A673 (cell line): ENCODE measurements at regions of chr2 and their contacts with region 1.

Region 1: DNA sequence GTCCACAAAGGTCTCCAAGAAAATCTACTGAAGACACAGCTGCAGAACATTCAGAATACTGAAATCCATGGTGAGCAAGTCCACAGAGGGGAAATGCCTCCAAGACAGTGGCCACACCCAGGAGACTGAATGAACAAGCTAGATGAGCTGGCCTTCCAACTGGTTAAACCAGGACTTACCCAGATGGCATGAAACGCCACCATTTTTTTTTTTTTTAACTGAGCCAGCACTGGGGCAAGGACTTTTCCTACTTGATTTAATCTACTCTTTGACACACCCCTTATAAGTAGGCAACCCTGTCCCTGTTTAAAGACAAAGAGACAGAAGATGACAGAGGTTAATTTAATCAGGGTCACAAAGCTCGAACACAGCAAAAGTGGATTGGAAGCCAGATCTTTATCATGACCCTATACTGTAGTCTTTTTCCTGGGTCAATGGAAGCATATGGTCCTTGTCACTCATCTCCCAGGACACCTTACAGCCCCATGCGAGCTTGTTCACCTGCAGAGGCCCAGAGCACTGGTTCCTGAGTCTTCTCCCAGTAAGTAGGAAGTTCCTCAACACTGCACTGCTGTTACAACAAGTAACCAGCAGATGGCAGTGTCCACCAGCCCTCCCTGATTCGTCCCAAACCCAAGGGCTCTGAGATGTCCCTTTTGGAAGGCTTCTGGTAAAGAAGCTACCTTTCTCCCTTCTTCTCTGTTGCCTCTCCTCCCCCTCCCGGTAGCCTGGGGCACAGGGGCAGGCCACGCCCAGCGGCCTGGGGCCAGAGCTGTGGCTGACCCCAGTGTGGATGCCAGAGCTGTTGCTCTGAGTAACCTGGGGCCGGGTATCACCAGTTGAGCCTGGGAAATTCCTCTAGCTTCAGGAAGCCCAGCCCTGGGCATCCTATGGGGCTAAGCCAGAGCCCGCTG is 5.6 kb upstream of the GDF7 start:
- DNase-seq: peak; percentile 83
- H3K4me3 ChIP-seq: no peak overlapping the region
- H3K27ac ChIP-seq: no peak overlapping the region
- H3K4me1 ChIP-seq: peaks cover 1% of the 10 kb centered on the region
- H3K27me3 ChIP-seq: peaks cover 96% of the 10 kb centered on the region
- CTCF ChIP-seq: peak; percentile 94

Region 2: DNA sequence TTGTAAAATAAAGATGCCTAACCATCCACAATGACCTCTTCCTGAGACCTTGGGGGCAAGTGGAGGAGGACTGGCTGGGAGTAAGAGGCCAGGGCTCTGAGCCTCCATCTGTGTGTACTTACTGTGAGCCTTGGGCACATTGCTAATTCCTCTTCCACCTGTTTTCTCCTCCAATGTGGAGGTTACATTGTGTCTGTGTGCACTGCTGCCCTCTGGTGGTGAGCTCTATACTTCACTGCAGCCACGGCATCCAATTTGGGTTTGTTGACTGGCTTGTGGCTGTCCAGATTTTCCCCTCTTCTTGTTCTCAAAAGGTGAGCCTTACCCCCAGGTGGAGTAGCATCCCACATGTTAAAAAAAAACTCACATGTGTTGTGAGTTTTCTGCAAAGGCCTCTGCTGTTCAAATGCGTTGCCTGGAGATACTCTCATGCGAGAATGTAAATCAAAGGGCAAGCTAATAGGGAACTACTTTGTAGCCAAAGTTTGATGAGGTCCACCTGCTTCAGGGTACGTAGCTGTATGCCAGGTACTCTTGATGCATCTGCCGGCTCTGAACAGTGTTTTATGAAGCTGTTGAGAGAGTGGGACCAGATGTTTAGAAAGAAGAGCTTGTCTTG is 301.7 kb after region 1 on chr2:
- CTCF ChIA-PET with region 1: interaction called, 55 read pairs
- POLR2A ChIA-PET with region 1: no interaction called
- intact Hi-C with region 1: loop called (anchors 1 kb)
- DNase-seq: peak; percentile 63
- H3K4me3 ChIP-seq: no peak overlapping the region
- H3K27ac ChIP-seq: no peak overlapping the region
- H3K4me1 ChIP-seq: no peaks in the 10 kb centered on the region
- H3K27me3 ChIP-seq: peaks cover 91% of the 10 kb centered on the region
- CTCF ChIP-seq: peak; percentile 91

Region 3: GRCh38 chr2:21025690-21026478 is 364.6 kb after region 1 on chr2:
- CTCF ChIA-PET with region 1: no interaction called
- POLR2A ChIA-PET with region 1: no interaction called
- intact Hi-C with region 1: loop called (anchors 5 kb)
- DNase-seq: no peak
- H3K4me3 ChIP-seq: no peak overlapping the region
- H3K27ac ChIP-seq: no peak overlapping the region
- H3K4me1 ChIP-seq: no peaks in the 10 kb centered on the region
- H3K27me3 ChIP-seq: peaks cover 65% of the 10 kb centered on the region
- CTCF ChIP-seq: no peak

Region 4: GRCh38 chr2:21118302-21118920 is 457.1 kb after region 1 on chr2:
- CTCF ChIA-PET with region 1: no interaction called
- POLR2A ChIA-PET with region 1: no interaction called
- intact Hi-C with region 1: loop called (anchors 2 kb)
- DNase-seq: peak; percentile 37
- H3K4me3 ChIP-seq: no peak overlapping the region
- H3K27ac ChIP-seq: no peak overlapping the region
- H3K4me1 ChIP-seq: no peaks in the 10 kb centered on the region
- H3K27me3 ChIP-seq: peaks cover 28% of the 10 kb centered on the region
- CTCF ChIP-seq: peak; percentile 64